Dendritic cell treated with granulocyte-macrophage colony-stimulating factor and Interleukin-4, amounts not matched to agents 40 ng/mL and 50 ng/mL, for 4 days (primary cell): ENCODE measurements at regions of chr9 and their contacts with region 1.

Region 1: DNA sequence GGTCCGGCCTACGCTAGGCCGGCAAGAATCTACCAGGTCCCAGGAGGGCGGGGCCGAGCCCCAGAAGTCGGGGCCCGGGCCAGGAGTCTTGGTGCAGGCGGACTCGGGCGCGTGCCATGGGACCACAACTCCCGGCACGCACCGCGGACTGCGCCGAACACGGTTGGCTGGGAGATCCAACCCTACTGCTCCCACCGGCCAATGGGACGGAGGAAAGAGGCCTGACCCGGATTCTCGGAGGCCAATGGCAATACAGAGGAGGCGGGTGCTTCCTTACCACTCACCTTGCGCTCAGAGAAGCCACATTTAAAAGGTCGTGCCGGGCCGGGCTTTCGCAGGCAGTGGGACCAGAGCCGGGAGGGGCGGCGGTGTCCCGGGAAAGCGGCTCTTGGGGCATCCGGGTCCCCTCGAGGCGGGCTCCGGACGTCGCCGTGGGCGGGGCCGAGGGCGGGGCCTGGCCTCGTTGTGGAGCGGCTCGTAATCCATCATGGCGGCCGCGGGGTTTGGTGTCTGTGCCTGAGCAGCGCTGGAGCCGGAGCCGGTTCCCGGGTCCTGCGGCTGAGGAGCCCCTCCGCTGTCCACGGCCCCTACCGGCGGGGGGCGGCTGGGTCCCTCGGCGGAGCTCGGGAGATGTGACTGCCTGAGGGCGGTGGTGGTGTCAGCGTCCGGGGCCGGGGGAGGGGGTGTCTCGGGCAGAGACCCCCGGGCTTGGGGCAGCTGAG is 19.1 kb downstream of the EXOSC2 start:
- H3K4me3 Mint-ChIP-seq: peak overlapping the region; percentile 96
- H3K27ac Mint-ChIP-seq: peak overlapping the region; percentile 97
- H3K4me1 Mint-ChIP-seq: peaks cover 25% of the 10 kb centered on the region
- H3K27me3 Mint-ChIP-seq: peaks cover 7% of the 10 kb centered on the region

Region 2: GRCh38 chr9:130693426-130694191 is 19.1 kb before region 1 on chr9 and contains the start of gene EXOSC2:
- intact Hi-C with region 1: loop called (anchors 1 kb)
- H3K4me3 Mint-ChIP-seq: peak within 1 kb of the TSS; percentile 93
- H3K27ac Mint-ChIP-seq: peak within 1 kb of the TSS; percentile 81
- H3K4me1 Mint-ChIP-seq: peaks cover 24% of the 10 kb centered on the region
- H3K27me3 Mint-ChIP-seq: peaks cover 14% of the 10 kb centered on the region

Region 3: DNA sequence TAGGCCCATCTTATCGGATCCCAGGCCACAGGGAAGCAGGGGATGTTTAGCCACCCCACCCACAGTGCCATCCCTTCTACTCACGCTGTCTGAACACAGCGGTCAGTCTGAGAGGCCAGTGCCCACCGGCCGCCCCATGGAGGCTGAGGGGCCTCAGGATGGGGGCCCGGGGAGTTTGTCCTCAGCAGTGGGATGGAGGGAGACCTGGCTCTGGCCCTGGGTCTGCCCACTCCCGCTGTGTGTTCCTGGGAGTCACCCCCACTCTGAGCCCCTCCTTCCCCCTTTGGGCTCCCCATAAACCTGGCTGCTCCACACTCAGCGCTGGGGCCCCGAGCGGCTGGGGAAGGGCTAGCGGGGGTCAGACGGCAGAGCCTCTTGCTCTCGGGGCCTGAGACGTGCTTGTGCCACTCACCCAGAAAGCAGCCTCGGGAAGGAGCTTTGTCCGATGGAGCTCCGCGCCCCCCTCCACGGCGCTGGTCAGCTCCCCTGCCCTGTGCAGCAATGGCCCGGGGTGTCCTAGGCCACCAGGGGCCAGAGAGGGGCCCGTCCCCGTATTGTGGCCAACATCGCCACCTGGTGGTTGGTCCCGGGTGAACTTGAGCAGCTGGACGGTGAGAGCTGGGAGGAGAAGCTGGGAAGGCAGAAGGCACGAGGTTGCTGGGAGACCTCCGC is 285.3 kb after region 1 on chr9:
- intact Hi-C with region 1: loop called (anchors 5 kb)
- H3K4me3 Mint-ChIP-seq: no peak overlapping the region
- H3K27ac Mint-ChIP-seq: no peak overlapping the region
- H3K4me1 Mint-ChIP-seq: peaks cover 9% of the 10 kb centered on the region
- H3K27me3 Mint-ChIP-seq: peaks cover 9% of the 10 kb centered on the region